ENCODE measurements at regions of chr3 and their contacts with region 1.

Region 1: DNA sequence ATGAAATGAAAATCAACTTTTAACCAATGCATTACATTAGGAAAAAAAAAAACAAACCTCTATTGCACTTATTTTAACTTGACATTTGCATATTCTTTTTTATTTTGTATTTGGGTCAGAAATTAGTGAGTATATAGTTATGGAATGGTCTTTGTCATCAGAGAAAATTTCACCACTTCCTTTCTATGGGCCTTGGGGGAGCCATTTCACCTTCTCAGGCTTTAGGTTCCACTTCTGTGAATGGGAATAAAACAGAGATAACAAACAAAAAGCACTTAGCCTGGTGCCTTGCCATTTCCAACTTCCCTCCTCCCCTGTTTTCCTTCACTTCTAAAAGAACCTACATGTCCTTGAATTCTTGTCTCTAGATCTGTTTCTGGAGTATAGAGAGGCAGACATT is 168.0 kb upstream of the STT3B start:
- DNase-seq: no peak
- ATAC-seq: no peak
- H3K4me3 ChIP-seq: no peak overlapping the region
- H3K4me3 Mint-ChIP-seq: no peak overlapping the region
- H3K27ac ChIP-seq: no peak overlapping the region
- H3K27ac Mint-ChIP-seq: no peak overlapping the region
- H3K4me1 ChIP-seq: no peaks in the 10 kb centered on the region
- H3K4me1 Mint-ChIP-seq: peaks cover 24% of the 10 kb centered on the region
- H3K27me3 ChIP-seq: no peaks in the 10 kb centered on the region
- H3K27me3 Mint-ChIP-seq: no peaks in the 10 kb centered on the region
- CTCF ChIP-seq: no peak

Region 2: GRCh38 chr3:31346542-31346979 is 18.1 kb before region 1 on chr3:
- CTCF ChIA-PET with region 1: no interaction called
- POLR2A ChIA-PET with region 1: no interaction called
- intact Hi-C with region 1: loop called in 1 of 2 experiments (anchors 1 kb)
- DNase-seq: no peak
- ATAC-seq: no peak
- H3K4me3 ChIP-seq: no peak overlapping the region
- H3K4me3 Mint-ChIP-seq: no peak overlapping the region
- H3K27ac ChIP-seq: no peak overlapping the region
- H3K27ac Mint-ChIP-seq: no peak overlapping the region
- H3K4me1 ChIP-seq: no peaks in the 10 kb centered on the region
- H3K4me1 Mint-ChIP-seq: no peaks in the 10 kb centered on the region
- H3K27me3 ChIP-seq: no peaks in the 10 kb centered on the region
- H3K27me3 Mint-ChIP-seq: no peaks in the 10 kb centered on the region
- CTCF ChIP-seq: no peak